Ovary (tissue), 10 donors: ENCODE measurements at regions of chr19 and their contacts with region 1.

Region 1: DNA sequence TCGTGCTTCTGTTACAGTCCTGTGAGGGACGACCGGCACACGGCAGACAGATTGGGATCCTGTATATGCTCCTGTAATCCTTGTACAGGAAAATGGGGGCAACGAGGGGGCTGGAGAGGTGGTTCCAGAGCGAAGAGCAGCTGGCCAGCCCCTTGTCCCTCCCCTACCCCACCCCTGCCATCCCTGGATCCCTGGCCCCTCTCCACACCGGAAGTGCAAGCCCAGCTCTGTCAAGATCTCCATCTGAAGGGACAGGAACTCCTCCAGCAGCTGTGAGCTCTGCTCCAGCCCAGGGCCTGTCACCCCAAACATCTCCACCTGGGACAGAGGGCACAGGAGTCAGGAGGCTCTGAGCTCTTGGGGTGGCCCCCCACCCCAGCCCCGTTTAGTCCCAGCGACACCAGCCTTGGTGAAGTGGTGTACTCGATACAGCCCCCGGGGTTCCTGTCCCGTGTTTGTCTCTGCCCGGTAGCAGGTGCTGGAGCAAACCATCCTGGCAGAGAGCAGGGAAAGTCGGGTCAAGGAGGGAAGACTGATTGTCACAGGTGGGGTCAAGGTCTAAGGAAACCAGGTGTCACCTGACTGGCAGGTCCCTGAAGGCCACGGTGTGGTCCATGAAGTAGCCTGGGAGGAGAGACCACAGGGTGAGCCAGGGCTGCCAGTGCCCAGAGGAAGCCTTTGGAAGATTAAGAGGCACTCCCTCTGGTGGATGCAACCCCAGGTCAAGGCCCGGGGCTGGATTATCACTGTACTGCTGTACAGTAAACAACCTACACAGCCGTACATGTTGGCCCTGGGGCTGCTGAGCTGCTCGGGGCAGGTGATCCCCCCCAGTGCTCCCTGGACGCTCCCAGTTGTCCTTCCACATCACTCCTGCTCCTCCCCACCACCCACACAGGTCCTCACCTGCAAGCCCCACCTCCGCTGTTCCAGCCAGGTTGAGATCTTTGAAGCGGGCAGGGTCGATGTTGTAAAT is 5.8 kb upstream of the CCER2 start:
- DNase-seq: peak in 1 of 5 donors; percentile 36
- H3K4me3 ChIP-seq: no peak overlapping the region
- H3K27ac ChIP-seq: no peak overlapping the region
- H3K4me1 ChIP-seq: no peaks in the 10 kb centered on the region
- H3K27me3 ChIP-seq: no peaks in the 10 kb centered on the region
- CTCF ChIP-seq: no peak
- EP300 ChIP-seq: no peak
- POLR2A ChIP-seq: no peak

Region 2: GRCh38 chr19:38387550-38388348 is 530.1 kb before region 1 on chr19 and contains the start of gene GGN:
- intact Hi-C with region 1: no loop called
- DNase-seq: peak; percentile 67 to 83 (median 81)
- H3K4me3 ChIP-seq: peak within 1 kb of the TSS; percentile 52
- H3K27ac ChIP-seq: peak within 1 kb of the TSS in 1 of 2 donors; percentile 31
- H3K4me1 ChIP-seq: peaks cover 10% of the 10 kb centered on the region
- H3K27me3 ChIP-seq: no peaks in the 10 kb centered on the region
- CTCF ChIP-seq: no peak
- EP300 ChIP-seq: no peak
- POLR2A ChIP-seq: no peak
- total RNA-seq, gene GGN: 0.24 to 0.75 (median 0.69) TPM in 5 of 7 donors, not detected in the others

Region 3: DNA sequence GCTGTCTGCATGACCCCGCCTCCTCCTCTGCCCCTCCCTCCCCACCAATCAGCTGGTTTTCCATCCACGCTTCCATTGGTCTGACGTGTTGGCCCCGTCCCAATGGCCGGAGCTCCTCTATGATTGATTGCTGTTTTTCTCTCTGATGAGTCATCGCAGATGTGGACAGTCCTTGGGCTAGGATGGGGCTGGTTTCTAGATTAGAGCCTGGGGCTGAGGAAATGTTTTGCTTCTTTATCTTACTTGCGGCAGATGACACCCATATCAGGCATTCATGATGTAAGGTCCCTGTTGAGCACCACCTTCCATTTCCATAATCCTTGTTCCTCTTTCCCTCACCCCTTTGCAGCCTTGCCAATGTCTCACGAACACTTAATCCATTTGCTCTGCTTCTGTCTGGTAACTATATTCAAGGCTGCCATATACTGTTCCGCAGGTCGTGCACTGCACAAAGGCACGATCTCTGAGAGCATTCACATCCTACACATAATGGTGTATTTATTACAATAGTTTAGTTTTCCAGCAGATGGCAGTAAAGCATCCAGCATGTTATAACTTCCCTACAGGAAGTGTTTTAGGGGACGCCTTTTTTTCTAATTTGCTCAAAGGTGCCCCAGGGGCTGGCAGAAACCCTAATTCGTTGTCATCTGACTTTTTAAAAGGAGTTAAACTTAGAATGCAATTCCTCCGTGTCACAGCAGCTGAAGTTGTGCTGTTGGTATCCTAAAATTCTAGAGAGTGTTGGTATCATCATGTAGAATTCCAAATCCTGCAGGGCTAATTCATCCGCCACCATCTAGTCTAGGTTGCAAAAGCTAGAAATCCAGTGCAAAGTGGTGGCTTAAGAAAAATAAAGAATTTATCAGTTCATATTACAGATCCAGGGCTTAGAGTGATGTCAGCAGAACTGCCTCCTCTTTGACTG is 373.5 kb before region 1 on chr19:
- intact Hi-C with region 1: loop called in 1 of 4 experiments (anchors 10 kb)
- DNase-seq: peak; percentile 46 to 69 (median 65)
- H3K4me3 ChIP-seq: no peak overlapping the region
- H3K27ac ChIP-seq: no peak overlapping the region
- H3K4me1 ChIP-seq: peaks cover 4% of the 10 kb centered on the region
- H3K27me3 ChIP-seq: no peaks in the 10 kb centered on the region
- CTCF ChIP-seq: peak in 2 of 3 donors; percentile 11 to 42
- EP300 ChIP-seq: no peak
- POLR2A ChIP-seq: no peak

Region 4: DNA sequence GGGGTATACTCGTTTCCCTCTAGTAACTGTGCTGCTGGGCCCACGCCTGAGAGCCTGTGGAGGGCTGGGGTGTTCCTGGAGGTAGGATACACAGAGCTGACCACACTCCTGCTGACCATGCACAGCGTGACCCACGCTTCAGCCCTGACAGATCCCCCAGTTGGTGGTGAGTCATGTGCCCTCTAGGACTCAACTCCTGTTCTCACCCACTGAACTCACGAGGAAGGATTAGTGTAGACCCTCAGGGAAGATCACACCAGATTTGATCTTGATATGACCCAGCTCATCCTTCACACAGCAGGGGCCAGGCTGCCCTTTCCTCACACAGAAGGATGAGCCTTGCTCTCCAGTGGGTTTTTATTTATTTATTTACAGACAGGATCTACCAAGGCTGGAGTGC is 153.1 kb after region 1 on chr19:
- intact Hi-C with region 1: no loop called
- DNase-seq: no peak
- H3K4me3 ChIP-seq: no peak overlapping the region
- H3K27ac ChIP-seq: no peak overlapping the region
- H3K4me1 ChIP-seq: no peaks in the 10 kb centered on the region
- H3K27me3 ChIP-seq: no peaks in the 10 kb centered on the region
- CTCF ChIP-seq: no peak
- EP300 ChIP-seq: no peak
- POLR2A ChIP-seq: no peak